ENCODE measurements at regions of chr6 and their contacts with region 1.

Region 1: GRCh38 chr6:36546920-36547645 is at the start of gene STK38:
- DNase-seq: peak; percentile 84
- ATAC-seq: peak; percentile 86
- H3K4me3 Mint-ChIP-seq: peak within 1 kb of the TSS; percentile 98
- H3K27ac Mint-ChIP-seq: peak within 1 kb of the TSS; percentile 96
- H3K4me1 Mint-ChIP-seq: peaks cover 65% of the 10 kb centered on the region
- H3K27me3 Mint-ChIP-seq: no peaks in the 10 kb centered on the region
- CTCF ChIP-seq: no peak
- total RNA-seq, gene STK38: 23.2 and 26.1 TPM in 2 replicates

Region 2: DNA sequence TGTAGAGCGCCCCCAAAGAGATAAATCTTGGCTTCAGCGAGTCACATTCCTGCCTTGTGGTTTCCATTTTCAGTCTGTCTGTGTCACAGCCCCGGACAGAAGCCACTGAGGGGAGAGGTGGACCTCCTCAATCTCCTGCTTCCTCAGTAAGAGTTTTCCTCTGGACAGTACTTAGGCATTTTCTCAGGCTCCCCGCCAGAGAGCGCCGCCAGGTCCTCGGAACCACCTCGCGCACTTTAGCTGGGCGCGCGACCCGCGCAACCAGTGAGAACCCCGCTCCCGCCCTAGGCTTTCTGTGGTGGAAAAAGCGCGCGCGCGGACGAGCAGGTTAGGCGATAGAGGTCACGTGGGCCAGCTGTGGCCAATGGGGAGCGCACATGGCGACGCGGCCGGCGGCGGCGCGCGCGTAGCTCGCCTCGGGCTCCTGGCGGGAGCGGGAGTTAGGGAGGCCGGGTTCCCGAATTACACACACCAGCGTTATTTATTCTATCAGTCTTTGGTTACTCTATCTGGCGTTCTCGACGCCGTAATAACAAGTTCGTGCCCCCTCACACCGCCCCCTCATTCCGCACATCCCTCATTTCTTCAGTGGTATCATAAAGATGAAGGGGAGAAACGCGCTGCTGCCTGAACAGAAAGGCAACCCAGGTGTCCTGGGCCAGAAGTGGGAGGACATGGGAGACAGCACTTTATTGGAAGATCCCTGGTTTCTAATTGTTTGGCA is 123.8 kb before region 1 on chr6:
- CTCF ChIA-PET with region 1: no interaction called
- POLR2A ChIA-PET with region 1: no interaction called
- intact Hi-C with region 1: loop called (anchors 1 kb)
- DNase-seq: peak; percentile 91
- ATAC-seq: peak; percentile 95
- H3K4me3 Mint-ChIP-seq: peak overlapping the region; percentile 94
- H3K27ac Mint-ChIP-seq: peak overlapping the region; percentile 89
- H3K4me1 Mint-ChIP-seq: peaks cover 16% of the 10 kb centered on the region
- H3K27me3 Mint-ChIP-seq: no peaks in the 10 kb centered on the region
- CTCF ChIP-seq: no peak

Region 3: GRCh38 chr6:36442671-36443470 is 104.2 kb before region 1 on chr6 and contains the starts of genes KCTD20 and PXT1:
- CTCF ChIA-PET with region 1: no interaction called
- POLR2A ChIA-PET with region 1: no interaction called
- intact Hi-C with region 1: loop called (anchors 1 kb)
- DNase-seq: peak; percentile 85
- ATAC-seq: peak; percentile 84
- H3K4me3 Mint-ChIP-seq: peak within 1 kb of the TSS; percentile 98
- H3K27ac Mint-ChIP-seq: peak within 1 kb of the TSS; percentile 96
- H3K4me1 Mint-ChIP-seq: peaks cover 46% of the 10 kb centered on the region
- H3K27me3 Mint-ChIP-seq: no peaks in the 10 kb centered on the region
- CTCF ChIP-seq: no peak
- total RNA-seq, gene KCTD20: 45.5 and 48.1 TPM in 2 replicates
- total RNA-seq, gene PXT1: 0.11 and 0.22 TPM in 2 replicates

Region 4: DNA sequence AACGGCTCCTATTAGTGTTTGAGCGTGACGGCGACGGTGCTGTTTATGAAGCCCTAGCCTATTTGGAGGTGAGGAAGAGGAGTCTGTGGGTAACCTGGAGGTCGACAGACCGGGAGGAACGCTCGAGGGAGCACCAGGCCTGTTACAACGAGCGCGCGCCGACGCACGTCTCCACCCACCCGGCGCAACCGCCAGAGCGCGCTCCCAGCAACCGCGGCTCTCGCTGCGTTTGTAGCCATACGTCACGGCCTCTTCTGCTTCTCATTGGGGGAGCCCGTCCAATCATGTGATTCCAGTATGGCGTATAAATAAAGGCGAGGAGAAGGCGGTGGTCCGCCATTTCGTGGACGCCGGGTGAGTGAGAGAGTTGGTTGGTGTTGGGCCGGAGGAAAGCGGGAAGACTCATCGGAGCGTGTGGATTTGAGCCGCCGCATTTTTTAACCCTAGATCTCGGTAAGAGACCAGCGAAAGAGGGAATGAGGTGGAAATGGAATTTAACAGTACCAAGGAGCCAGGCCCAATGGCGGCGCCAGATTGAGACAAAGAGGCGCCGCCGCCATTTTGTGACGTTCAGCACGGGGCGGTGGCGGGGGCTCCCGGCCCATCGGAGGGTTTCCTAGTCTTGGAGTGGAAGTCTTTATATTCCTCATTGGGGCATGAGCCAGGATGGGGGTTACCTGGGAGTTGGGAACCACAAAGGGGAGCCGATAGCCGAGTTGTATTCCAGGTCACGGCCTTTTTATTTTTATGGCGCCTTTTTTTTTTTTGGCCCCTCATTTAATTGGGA is 47.1 kb after region 1 on chr6 and contains the start of gene SRSF3:
- CTCF ChIA-PET with region 1: no interaction called
- POLR2A ChIA-PET with region 1: interaction called, 81 read pairs
- intact Hi-C with region 1: loop called (anchors 1 kb)
- DNase-seq: peak; percentile 87
- ATAC-seq: peak; percentile 91
- H3K4me3 Mint-ChIP-seq: peak within 1 kb of the TSS; percentile 96
- H3K27ac Mint-ChIP-seq: peak within 1 kb of the TSS; percentile 99
- H3K4me1 Mint-ChIP-seq: peaks cover 51% of the 10 kb centered on the region
- H3K27me3 Mint-ChIP-seq: no peaks in the 10 kb centered on the region
- CTCF ChIP-seq: no peak
- total RNA-seq, gene SRSF3: 421 and 494 TPM in 2 replicates

Region 5: DNA sequence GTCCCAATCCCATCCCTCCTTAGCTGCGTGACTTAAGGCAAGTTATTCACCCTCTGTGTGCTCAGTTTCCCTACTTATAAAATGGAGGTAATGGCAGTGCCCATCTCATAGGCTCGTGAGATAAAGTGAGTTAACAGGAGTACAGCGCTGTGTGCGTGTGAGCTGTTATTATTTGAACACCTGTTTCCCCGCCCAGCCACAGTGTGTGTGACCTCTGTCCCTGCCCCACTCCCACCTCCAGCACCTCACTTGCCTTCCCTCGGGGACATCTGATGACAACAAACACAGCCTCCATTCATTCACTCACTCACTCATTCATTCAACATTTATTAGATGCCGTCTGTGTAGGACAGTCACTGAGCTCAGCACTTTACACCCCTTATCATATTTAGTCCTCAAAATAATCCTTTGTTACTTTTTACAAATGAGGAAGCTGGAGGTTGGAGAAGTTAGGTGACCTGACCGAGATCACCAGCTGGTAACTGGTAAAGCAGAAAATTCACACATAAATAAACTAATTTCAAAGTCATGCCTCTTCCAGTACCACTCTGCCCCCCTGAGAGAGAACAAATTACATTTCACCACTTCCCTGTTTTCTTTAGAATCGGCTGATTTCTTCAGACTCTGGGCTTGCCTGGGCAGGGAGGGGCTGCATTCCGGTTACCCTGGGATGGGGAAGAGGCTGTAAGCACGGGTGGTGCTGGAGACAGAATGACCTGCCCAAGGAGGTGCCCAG is 233.5 kb after region 1 on chr6:
- CTCF ChIA-PET with region 1: no interaction called
- POLR2A ChIA-PET with region 1: interaction called, 10 read pairs
- intact Hi-C with region 1: no loop called
- DNase-seq: no peak
- ATAC-seq: peak; percentile 35
- H3K4me3 Mint-ChIP-seq: peak overlapping the region; percentile 17
- H3K27ac Mint-ChIP-seq: peak overlapping the region; percentile 76
- H3K4me1 Mint-ChIP-seq: peaks cover 25% of the 10 kb centered on the region
- H3K27me3 Mint-ChIP-seq: peaks cover 10% of the 10 kb centered on the region
- CTCF ChIP-seq: no peak

Region 6: DNA sequence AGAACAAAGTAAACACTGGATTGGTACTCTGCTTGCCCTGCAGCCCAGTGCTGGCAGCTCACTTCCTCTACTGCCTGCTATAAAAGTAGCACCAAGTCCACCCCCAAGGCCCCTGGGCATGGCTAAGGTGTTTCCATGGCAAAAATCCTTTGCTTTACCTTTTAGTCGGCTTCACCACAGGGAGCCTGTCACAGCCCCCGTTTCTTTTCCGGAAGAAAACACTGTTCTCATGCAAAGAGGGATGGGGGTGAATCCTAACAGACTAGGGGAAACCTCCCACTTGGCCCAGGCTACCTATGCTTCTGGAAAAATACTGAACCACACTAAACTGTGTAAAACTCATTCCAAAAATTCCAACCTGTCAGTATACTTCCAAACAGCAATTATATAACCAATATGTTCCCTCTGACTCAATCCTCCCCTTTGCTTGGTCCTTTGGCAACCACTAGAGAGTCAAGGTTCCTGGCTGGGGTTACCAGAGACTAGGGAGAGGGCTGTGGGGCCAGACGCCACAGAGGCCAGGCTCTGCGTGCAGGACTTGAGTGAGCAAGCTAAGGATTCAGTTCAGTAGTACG is 311.4 kb after region 1 on chr6:
- CTCF ChIA-PET with region 1: no interaction called
- POLR2A ChIA-PET with region 1: no interaction called
- intact Hi-C with region 1: no loop called
- DNase-seq: no peak
- ATAC-seq: no peak
- H3K4me3 Mint-ChIP-seq: no peak overlapping the region
- H3K27ac Mint-ChIP-seq: no peak overlapping the region
- H3K4me1 Mint-ChIP-seq: no peaks in the 10 kb centered on the region
- H3K27me3 Mint-ChIP-seq: no peaks in the 10 kb centered on the region
- CTCF ChIP-seq: no peak

Measured in activated B cell treated with CpG ODN at 0.5 μM for 24 hours (primary cell).